ENCODE measurements at regions of chr5 and their contacts with region 1.

Region 1: DNA sequence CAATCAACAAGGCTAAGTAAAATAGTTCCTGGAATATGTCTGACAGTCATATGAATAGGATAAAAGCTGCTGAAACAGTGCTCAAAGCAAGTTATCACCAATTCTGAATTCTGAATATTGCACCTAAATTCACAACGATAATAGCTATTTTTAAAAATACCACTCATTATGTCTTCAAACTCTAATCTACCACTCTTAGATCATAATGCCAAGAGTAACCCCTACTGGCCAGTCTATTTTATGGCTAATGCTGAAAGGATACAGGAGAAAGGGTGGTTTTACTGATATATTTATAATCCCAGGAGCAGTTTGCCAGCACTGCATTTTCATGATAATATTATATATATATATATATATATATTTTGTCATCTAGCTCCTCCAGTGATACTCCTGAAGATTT is 232.8 kb downstream of the PDE4D start:
- DNase-seq: no peak
- ATAC-seq: no peak
- H3K4me3 ChIP-seq: no peak overlapping the region
- H3K4me1 ChIP-seq: peaks cover 7% of the 10 kb centered on the region
- CTCF ChIP-seq: no peak

Region 2: GRCh38 chr5:59506285-59506877 is 154.4 kb before region 1 on chr5:
- intact Hi-C with region 1: loop called in 1 of 2 experiments (anchors 5 kb)
- DNase-seq: no peak
- ATAC-seq: no peak
- H3K4me3 ChIP-seq: no peak overlapping the region
- H3K4me1 ChIP-seq: no peaks in the 10 kb centered on the region
- CTCF ChIP-seq: no peak

Region 3: DNA sequence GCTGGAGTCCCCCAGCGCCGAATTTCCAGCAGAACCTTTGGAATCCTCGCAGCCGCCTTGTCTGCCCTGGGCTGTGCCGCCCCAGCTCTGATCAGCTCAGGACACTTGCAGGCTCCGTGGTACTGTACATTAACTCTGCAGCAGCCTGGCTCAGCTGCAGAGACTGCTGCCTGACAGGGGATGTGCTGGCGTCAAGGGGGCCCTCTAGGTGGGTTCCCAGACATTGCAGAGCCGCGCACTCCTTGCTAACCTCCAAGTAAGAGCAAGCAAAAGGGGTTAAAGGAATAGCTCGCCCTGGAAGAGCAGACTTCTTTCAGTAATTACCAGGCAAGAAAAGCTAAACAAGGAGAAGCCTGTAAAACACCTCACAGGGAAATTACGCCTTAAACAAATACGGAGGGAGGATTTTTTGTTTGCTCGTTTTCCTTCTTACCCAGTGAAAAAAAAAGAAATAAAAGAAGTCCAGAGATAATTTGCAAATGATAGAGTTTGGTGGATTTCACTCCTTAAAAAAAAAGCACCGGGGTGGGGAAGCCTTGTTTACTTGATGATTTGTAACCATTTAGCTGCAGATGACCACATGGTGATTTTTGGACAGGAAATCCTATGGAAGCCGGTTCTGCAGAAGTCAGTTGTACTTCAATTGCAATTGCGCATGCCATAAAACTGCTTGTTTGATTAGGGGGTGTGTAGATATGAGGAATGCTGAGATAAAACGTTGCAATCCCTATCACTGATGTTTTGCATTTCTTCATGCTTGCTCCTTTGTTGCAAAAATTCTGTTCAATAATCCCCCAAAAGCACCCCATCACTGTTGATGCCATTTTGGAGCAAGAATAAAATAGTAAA is 73.0 kb before region 1 on chr5:
- intact Hi-C with region 1: loop called in 1 of 2 experiments (anchors 10 kb)
- DNase-seq: peak; percentile 84 to 86 (median 85)
- ATAC-seq: peak; percentile 79
- H3K4me3 ChIP-seq: no peak overlapping the region
- H3K4me1 ChIP-seq: peaks cover 17% of the 10 kb centered on the region
- CTCF ChIP-seq: peak; percentile 11